HEK293 (cell line): ENCODE measurements at regions of chr1 and their contacts with region 1.

Region 1: GRCh38 chr1:75771978-75772377 is 14.1 kb upstream of the RABGGTB start:
- H3K4me3 ChIP-seq: no peak overlapping the region
- H3K27ac ChIP-seq: no peak overlapping the region
- H3K4me1 ChIP-seq: no peaks in the 10 kb centered on the region
- CTCF ChIP-seq: no peak

Region 2: GRCh38 chr1:75785983-75786853 is 14.2 kb after region 1 on chr1 and contains the start of gene RABGGTB:
- CTCF ChIA-PET with region 1: no interaction called
- POLR2A ChIA-PET with region 1: interaction called, 10 read pairs
- H3K4me3 ChIP-seq: peak within 1 kb of the TSS; percentile 79
- H3K27ac ChIP-seq: peak within 1 kb of the TSS; percentile 50
- H3K4me1 ChIP-seq: no peaks in the 10 kb centered on the region
- CTCF ChIP-seq: no peak